K562 (cell line): ENCODE measurements at regions of chr2 and their contacts with region 1.

Region 1: GRCh38 chr2:174603280-174603679 is 5.7 kb upstream of the WIPF1 start:
- DNase-seq: peak in 2 of 4 experiments; percentile 42 to 62
- ATAC-seq: peak; percentile 94
- H3K4me3 ChIP-seq: no peak overlapping the region
- H3K27ac ChIP-seq: no peak overlapping the region
- H3K4me1 ChIP-seq: no peaks in the 10 kb centered on the region; a peak in 1 of 5 replicates
- H3K27me3 ChIP-seq: no peaks in the 10 kb centered on the region; a peak in 2 of 5 replicates
- CTCF ChIP-seq: peak; percentile 45 to 74 (median 64)
- EP300 ChIP-seq: no peak; the same call in 1 of the 2 replicates
- POLR2A ChIP-seq: no peak
- RAD21 ChIP-seq: peak; percentile 66 to 81

Region 2: DNA sequence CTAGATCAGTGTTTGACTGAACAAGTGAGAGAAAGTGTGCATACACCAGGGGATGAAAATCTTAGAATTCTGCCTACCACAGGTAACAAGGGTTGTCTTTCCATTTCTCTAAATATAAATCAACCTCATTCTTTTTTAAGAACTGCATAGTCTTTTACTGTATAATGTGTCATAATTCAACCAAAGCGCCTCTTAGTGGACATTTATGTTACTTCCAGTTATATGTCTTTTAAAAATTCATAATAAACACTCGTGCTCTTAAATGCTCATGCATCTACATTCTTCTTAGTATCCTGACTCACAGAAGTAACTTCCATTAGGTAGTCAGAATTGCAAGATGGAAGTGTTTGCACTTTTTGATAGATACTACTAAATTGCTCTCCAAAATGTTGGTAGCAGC is 84.8 kb after region 1 on chr2:
- CTCF ChIA-PET with region 1: interaction called, 3 read pairs
- POLR2A ChIA-PET with region 1: no interaction called
- in situ Hi-C with region 1: no loop called
- intact Hi-C with region 1: loop called (anchors 1 kb)
- DNase-seq: peak in 1 of 4 experiments; percentile 37
- ATAC-seq: peak; percentile 70; the same call in 2 of the 3 replicates
- H3K4me3 ChIP-seq: no peak overlapping the region
- H3K27ac ChIP-seq: no peak overlapping the region
- H3K4me1 ChIP-seq: no peaks in the 10 kb centered on the region
- H3K27me3 ChIP-seq: peaks cover 11 to 19% of the 10 kb centered on the region in 2 experiments; a peak in 3 of 5 replicates
- CTCF ChIP-seq: peak; percentile 24 to 67 (median 44); a peak in 4 of 6 replicates
- EP300 ChIP-seq: no peak
- POLR2A ChIP-seq: no peak
- RAD21 ChIP-seq: peak; percentile 56 to 82

Region 3: GRCh38 chr2:175010848-175011254 is 407.6 kb after region 1 on chr2:
- CTCF ChIA-PET with region 1: no interaction called
- POLR2A ChIA-PET with region 1: no interaction called
- in situ Hi-C with region 1: no loop called
- intact Hi-C with region 1: no loop called
- DNase-seq: no peak
- ATAC-seq: no peak
- H3K4me3 ChIP-seq: no peak overlapping the region
- H3K27ac ChIP-seq: no peak overlapping the region
- H3K4me1 ChIP-seq: no peaks in the 10 kb centered on the region
- H3K27me3 ChIP-seq: peaks cover 9 to 10% of the 10 kb centered on the region in 2 experiments; a peak in 3 of 5 replicates
- CTCF ChIP-seq: no peak
- EP300 ChIP-seq: no peak
- POLR2A ChIP-seq: no peak
- RAD21 ChIP-seq: no peak